ENCODE measurements at regions of chr1 and their contacts with region 1.

Region 1: GRCh38 chr1:66503841-66504470 is 30.0 kb upstream of the SGIP1 start:
- DNase-seq: peak; percentile 52
- H3K4me3 ChIP-seq: no peak overlapping the region
- H3K27ac ChIP-seq: no peak overlapping the region
- H3K4me1 ChIP-seq: no peaks in the 10 kb centered on the region
- CTCF ChIP-seq: peak; percentile 90

Region 2: DNA sequence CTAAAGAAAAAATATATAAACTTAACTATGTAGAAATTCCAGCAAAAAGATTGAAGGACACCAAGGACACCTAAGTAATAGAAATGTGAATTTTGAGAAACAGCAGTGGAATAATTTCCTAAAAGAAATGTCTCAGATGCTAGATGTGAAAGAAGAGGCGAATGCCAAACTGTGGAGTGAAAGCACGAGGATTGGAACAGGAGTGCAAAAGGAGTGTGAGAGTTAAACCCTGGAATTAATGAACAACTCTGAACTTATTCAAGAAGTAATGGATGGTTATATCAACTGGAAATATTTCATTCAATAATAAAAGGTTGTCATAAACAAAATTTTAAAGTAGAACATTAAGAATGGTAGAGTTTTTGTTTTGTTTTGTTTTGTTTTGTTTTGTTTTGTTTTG is 48.5 kb before region 1 on chr1:
- CTCF ChIA-PET with region 1: interaction called, 3 read pairs
- POLR2A ChIA-PET with region 1: no interaction called
- intact Hi-C with region 1: loop called (anchors 5 kb)
- DNase-seq: no peak
- H3K4me3 ChIP-seq: no peak overlapping the region
- H3K27ac ChIP-seq: no peak overlapping the region
- H3K4me1 ChIP-seq: no peaks in the 10 kb centered on the region
- CTCF ChIP-seq: no peak

Region 3: GRCh38 chr1:66685670-66686069 is 181.7 kb after region 1 on chr1:
- CTCF ChIA-PET with region 1: no interaction called
- POLR2A ChIA-PET with region 1: no interaction called
- intact Hi-C with region 1: no loop called
- DNase-seq: no peak
- H3K4me3 ChIP-seq: no peak overlapping the region
- H3K27ac ChIP-seq: no peak overlapping the region
- H3K4me1 ChIP-seq: no peaks in the 10 kb centered on the region
- CTCF ChIP-seq: no peak

Region 4: DNA sequence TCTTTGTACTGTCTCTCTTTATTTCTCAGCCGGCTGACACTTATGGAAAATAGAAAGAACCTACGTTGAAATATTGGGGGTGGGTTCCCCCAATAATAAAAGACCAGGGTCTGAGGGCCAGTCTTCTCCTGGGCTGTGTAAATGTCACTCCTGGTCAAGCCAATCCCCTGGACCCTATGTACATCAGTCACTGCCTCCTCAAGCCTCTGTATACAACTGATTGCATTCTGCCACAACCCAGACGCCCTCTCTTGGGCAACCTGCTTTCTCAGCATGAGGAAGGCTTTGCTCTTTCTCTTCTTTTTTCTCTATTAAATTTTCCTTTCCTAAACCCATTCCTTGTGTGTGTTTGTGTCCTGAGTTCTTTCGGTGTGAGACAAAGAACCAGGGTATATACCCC is 1010.3 kb after region 1 on chr1:
- CTCF ChIA-PET with region 1: no interaction called
- POLR2A ChIA-PET with region 1: no interaction called
- intact Hi-C with region 1: no loop called
- DNase-seq: no peak
- H3K4me3 ChIP-seq: no peak overlapping the region
- H3K27ac ChIP-seq: no peak overlapping the region
- H3K4me1 ChIP-seq: no peaks in the 10 kb centered on the region
- CTCF ChIP-seq: no peak